Activated CD4-positive, alpha-beta T cell treated with anti-CD3 and anti-CD28 coated beads for 36 hours (primary cell): ENCODE measurements at regions of chr6 and their contacts with region 1.

Region 1: GRCh38 chr6:45421709-45422502 is 44.2 kb upstream of the SUPT3H start:
- DNase-seq: peak; percentile 75
- ATAC-seq: peak; percentile 23
- H3K4me3 Mint-ChIP-seq: peak overlapping the region; percentile 90
- H3K27ac Mint-ChIP-seq: peak overlapping the region; percentile 94
- H3K4me1 Mint-ChIP-seq: peaks cover 36% of the 10 kb centered on the region
- H3K27me3 Mint-ChIP-seq: peaks cover 11% of the 10 kb centered on the region

Region 2: DNA sequence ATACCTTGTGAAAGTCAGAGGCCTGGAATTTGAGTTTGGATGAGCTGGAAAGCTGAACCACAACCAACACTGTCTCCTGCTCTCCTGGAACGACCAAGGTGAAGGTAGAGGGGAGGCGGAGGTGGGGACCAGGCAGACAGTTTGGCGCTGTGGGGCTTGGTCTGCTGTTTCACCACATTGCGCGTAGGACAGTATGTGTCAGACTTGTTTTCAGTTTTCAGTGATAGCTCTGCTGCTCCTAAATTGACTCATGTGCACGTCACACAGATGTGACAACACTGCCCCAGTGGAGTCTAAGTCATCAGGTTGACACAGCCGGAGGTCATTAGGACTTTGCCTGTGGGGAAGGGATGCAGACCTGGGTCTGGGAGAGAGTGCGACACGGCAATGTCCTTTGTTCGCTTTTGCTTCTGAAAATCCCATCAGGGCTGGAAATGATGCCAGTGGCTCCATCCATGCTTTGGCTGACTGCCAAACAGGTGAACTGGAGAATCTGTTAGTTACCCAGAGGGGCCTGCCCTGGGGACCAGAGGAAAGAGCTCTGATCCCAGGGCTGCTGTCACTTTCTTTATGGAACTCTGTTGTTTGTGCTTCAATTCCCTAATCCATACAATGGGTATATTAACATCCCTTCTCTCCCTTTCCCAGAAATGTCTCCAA is 778.9 kb before region 1 on chr6:
- CTCF ChIA-PET with region 1: no interaction called
- POLR2A ChIA-PET with region 1: no interaction called
- intact Hi-C with region 1: loop called (anchors 5 kb)
- DNase-seq: peak; percentile 85
- ATAC-seq: peak; percentile 87
- H3K4me3 Mint-ChIP-seq: peak overlapping the region; percentile 21
- H3K27ac Mint-ChIP-seq: peak overlapping the region; percentile 93
- H3K4me1 Mint-ChIP-seq: peaks cover 38% of the 10 kb centered on the region
- H3K27me3 Mint-ChIP-seq: peaks cover 2% of the 10 kb centered on the region

Region 3: GRCh38 chr6:45116714-45117410 is 305.0 kb before region 1 on chr6:
- CTCF ChIA-PET with region 1: interaction called, 3 read pairs
- POLR2A ChIA-PET with region 1: no interaction called
- intact Hi-C with region 1: loop called in 1 of 2 experiments (anchors 5 kb)
- DNase-seq: no peak
- ATAC-seq: peak; percentile 85
- H3K4me3 Mint-ChIP-seq: no peak overlapping the region
- H3K27ac Mint-ChIP-seq: peak overlapping the region; percentile 58
- H3K4me1 Mint-ChIP-seq: peaks cover 22% of the 10 kb centered on the region
- H3K27me3 Mint-ChIP-seq: no peaks in the 10 kb centered on the region

Region 4: DNA sequence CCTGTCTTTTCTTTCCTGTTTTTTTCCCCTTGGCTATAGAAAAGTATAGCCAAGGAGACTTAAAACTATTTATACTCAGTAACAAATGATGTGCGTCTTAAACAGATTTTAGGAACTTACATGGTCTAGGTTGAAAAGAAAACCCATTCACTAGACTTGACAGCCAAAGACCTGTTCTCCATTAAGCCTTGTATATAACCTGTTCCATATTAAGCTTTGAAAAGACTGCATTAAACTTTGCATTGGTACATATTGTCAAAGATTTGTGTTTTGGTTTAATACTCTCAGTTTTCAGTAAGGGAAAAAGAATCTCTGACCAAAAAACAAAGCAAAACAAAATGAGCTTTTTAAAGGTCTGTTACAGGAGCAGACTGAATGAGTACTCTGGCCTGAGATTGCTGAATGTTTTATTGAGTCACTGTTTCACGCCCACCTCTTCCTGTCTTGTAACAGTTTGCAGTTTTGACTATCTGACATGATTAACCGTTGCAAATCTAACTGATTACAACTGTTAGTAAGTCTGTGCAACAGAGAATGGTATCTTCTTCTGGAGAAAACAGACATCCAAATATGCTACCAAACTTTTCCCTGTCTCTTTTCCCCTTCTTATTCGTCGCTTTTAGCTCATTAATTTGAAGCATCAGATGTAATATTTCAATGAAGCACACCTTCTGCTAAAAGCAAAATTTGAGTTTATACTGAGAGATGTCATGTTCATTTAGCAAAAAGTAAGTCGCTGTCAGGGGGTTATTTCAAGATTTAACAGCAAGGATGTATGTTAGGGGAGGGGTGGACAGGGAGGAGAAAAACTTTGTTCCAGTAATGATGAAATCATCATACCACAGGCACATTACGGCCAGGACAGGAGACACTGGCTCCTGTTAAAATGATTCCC is 14.9 kb after region 1 on chr6:
- CTCF ChIA-PET with region 1: interaction called, 4 read pairs
- POLR2A ChIA-PET with region 1: no interaction called
- intact Hi-C with region 1: loop called (anchors 1 to 2 kb)
- DNase-seq: peak; percentile 69
- ATAC-seq: peak; percentile 92
- H3K4me3 Mint-ChIP-seq: peak overlapping the region; percentile 59
- H3K27ac Mint-ChIP-seq: peak overlapping the region; percentile 92
- H3K4me1 Mint-ChIP-seq: peaks cover 74% of the 10 kb centered on the region
- H3K27me3 Mint-ChIP-seq: peaks cover 2% of the 10 kb centered on the region

Region 5: GRCh38 chr6:45737331-45738056 is 315.6 kb after region 1 on chr6:
- CTCF ChIA-PET with region 1: interaction called, 3 read pairs
- POLR2A ChIA-PET with region 1: no interaction called
- intact Hi-C with region 1: loop called in 1 of 2 experiments (anchors 1 kb)
- DNase-seq: peak; percentile 27
- ATAC-seq: peak; percentile 75
- H3K4me3 Mint-ChIP-seq: peak overlapping the region; percentile 13
- H3K27ac Mint-ChIP-seq: peak overlapping the region; percentile 84
- H3K4me1 Mint-ChIP-seq: peaks cover 56% of the 10 kb centered on the region
- H3K27me3 Mint-ChIP-seq: peaks cover 12% of the 10 kb centered on the region